Naive thymus-derived CD4-positive, alpha-beta T cell (primary cell): ENCODE measurements at regions of chr4 and their contacts with region 1.

Region 1: DNA sequence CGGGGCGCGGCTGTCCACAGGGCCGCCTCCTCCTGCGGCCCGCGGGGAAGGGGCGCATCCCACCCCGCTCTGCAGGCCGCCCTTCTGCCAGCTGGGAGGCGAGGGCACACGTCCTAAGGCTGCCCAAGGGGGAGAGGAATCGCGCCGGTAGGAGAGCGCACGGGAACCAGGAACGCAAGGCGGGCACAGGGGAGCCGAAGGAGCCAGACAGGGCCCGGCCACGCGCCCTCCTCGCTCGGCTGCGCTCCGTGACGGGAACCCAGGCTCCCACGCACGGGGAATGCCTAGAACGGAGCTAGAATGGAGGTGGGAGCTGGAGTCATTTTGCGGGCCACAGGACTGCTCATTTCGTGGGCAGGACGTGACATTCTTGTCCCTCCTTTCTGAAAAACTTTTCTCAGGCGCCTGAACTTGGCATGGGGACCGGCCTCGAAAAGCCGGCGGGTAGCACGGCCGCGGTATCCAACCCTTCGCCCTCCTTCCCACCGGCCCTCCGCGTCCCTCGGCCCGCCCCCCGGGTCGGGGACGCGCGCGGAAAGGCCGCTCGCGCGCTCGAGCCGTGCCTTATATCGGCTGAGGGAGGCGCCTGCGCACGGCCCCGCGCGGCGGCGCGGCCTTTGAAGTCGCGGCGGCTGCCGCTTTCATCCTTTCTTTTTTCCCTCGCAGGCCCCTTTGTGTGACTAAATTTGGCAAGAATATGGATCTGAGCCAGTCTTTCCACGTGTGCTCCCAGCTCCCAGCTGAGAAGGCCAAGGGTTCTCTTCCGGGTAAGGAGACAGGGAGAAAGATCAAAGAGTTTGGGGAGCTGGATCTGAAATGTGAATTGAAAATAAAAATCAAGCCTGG is 4.2 kb upstream of the LEF1 start:
- DNase-seq: peak; percentile 68 to 81 (median 78)
- ATAC-seq: peak; percentile 67
- H3K4me3 ChIP-seq: peak overlapping the region; percentile 86
- H3K4me3 Mint-ChIP-seq: peak overlapping the region; percentile 89 to 100 (median 94)
- H3K27ac ChIP-seq: peak overlapping the region; percentile 93
- H3K27ac Mint-ChIP-seq: peak overlapping the region; percentile 90 to 97 (median 95)
- H3K4me1 ChIP-seq: peaks cover 3 to 33% of the 10 kb centered on the region in 2 donors
- H3K4me1 Mint-ChIP-seq: peaks cover 27 to 71% (median 61%) of the 10 kb centered on the region in 7 donors
- H3K27me3 ChIP-seq: no peaks in the 10 kb centered on the region
- H3K27me3 Mint-ChIP-seq: peaks cover 0 to 30% (median 0%) of the 10 kb centered on the region in 5 donors

Region 2: DNA sequence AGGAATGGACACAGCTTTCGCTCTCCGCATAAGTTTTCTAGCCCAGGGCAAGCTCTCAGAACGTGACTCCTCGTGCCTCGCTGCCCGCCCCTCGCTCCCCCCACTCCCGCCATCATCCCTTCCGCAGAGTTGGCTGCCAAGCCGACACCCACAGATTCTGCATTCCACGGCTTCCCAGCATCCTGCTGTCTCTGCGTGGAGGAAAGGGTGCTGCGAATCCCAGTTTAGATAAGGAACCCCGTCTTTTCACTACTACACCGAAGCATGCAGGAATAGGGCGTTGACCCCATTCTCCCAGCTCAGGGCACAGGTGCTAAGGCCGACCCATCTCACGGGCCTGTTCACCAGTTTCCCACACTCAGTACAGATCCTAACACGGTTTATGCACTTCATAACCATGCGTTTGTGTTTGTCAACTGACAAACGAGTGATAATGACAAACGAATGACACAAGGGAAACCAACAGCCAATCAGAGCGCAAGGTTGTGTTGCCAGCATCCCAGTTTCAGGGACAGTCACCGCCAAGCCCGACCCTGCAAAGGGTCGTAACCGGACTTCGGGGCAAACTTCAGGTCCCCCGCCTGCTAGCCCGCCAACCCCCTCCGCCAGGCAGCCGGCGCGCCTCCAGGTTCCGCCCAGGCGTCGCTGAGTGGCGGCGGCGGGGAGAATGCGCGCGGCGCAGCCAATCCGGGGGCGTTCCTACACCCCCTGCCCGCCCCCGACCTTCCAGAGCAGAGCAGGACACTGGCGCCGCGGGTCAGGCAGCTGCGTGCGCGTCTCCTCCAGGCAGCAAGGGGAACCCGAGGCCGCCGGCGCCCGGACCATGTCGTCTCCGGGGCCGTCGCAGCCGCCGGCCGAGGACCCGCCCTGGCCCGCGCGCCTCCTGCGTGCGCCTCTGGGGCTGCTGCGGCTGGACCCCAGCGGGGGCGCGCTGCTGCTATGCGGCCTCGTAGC is 241.9 kb before region 1 on chr4 and contains the start of gene CYP2U1:
- CTCF ChIA-PET with region 1: no interaction called
- POLR2A ChIA-PET with region 1: no interaction called
- intact Hi-C with region 1: loop called in 1 of 2 experiments (anchors 5 kb)
- DNase-seq: peak; percentile 74 to 84 (median 81)
- ATAC-seq: peak; percentile 96
- H3K4me3 ChIP-seq: peak within 1 kb of the TSS; percentile 86
- H3K4me3 Mint-ChIP-seq: peak within 1 kb of the TSS; percentile 90 to 98 (median 92)
- H3K27ac ChIP-seq: peak within 1 kb of the TSS; percentile 71
- H3K27ac Mint-ChIP-seq: peak within 1 kb of the TSS; percentile 65 to 98 (median 88)
- H3K4me1 ChIP-seq: peaks cover 8 to 12% of the 10 kb centered on the region in 2 donors
- H3K4me1 Mint-ChIP-seq: peaks cover 21 to 50% (median 35%) of the 10 kb centered on the region in 7 donors
- H3K27me3 ChIP-seq: no peaks in the 10 kb centered on the region
- H3K27me3 Mint-ChIP-seq: peaks cover 0 to 17% (median 0%) of the 10 kb centered on the region in 5 donors
- total RNA-seq, gene CYP2U1: 3.8 to 11.4 (median 5.8) TPM

Region 3: DNA sequence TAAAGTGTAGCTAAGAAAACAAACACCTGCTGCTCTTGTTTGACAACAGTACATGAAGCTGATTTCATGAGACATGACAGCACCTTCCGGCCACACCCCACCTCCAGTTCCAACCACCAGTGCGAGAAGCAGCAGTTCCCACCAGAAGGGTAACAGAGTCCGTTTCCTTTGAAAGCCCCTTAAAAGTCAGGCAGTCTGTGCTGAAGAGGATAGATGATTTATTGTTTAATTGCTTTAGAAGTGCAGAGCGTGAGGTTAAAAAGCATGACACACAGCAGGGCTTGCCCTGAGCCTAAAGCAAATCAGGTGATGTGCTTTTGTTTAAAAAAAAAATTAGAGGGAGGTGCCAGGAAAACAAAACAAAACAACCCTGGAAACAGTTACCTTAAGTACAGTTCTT is 100.7 kb before region 1 on chr4:
- CTCF ChIA-PET with region 1: interaction called, 3 read pairs
- POLR2A ChIA-PET with region 1: interaction called, 3 read pairs
- intact Hi-C with region 1: loop called in 1 of 2 experiments (anchors 1 kb)
- DNase-seq: peak in 7 of 9 donors; percentile 63 to 94 (median 80)
- ATAC-seq: peak; percentile 92
- H3K4me3 ChIP-seq: peak overlapping the region; percentile 0
- H3K4me3 Mint-ChIP-seq: peak overlapping the region; percentile 53 to 81 (median 74)
- H3K27ac ChIP-seq: peak overlapping the region; percentile 77
- H3K27ac Mint-ChIP-seq: peak overlapping the region; percentile 84 to 98 (median 94)
- H3K4me1 ChIP-seq: peaks cover 23 to 62% of the 10 kb centered on the region in 2 donors
- H3K4me1 Mint-ChIP-seq: peaks cover 32 to 95% (median 81%) of the 10 kb centered on the region in 7 donors
- H3K27me3 ChIP-seq: no peaks in the 10 kb centered on the region
- H3K27me3 Mint-ChIP-seq: no peaks in the 10 kb centered on the region

Region 4: DNA sequence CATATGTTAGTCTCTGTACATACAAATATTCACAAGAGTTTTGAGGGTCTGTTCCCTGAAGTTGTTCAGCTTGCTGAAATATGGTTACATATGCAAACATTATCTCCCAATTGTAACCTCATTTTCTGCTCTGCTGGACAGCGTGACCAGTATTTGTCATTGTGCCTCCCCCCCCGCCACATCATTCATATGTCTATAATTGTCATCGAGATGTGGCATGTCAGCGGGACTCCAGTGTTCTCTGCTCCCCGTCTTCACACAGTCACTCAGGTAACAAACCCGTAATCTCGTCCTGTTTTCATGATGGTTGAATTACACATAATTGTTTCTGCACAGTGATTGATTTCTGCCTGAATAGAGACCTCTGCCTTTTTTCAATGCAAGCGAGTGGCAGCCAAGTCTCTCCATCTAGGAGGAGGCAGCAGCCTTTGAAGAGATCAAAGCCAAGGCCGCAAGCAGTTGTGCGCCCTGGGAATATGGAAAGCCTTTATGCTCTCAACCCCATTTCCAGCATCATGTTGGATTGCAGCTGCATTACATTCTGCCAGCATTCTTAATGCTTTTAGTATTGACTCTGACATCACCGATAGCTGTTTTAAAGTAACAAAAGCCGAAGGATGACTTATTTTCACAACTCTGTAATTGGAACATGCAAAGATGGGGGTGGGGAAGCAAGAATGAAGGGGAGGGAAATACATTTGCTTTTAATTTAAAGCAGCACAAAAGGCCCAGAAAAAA is 31.6 kb before region 1 on chr4:
- CTCF ChIA-PET with region 1: no interaction called
- POLR2A ChIA-PET with region 1: interaction called, 31 read pairs
- intact Hi-C with region 1: no loop called
- DNase-seq: peak in 1 of 9 donors; percentile 53
- ATAC-seq: no peak
- H3K4me3 ChIP-seq: peak overlapping the region; percentile 38
- H3K4me3 Mint-ChIP-seq: peak overlapping the region; percentile 79 to 91 (median 84)
- H3K27ac ChIP-seq: peak overlapping the region; percentile 81
- H3K27ac Mint-ChIP-seq: peak overlapping the region; percentile 85 to 98 (median 95)
- H3K4me1 ChIP-seq: peaks cover 26 to 97% of the 10 kb centered on the region in 2 donors
- H3K4me1 Mint-ChIP-seq: peaks cover 61 to 99% (median 95%) of the 10 kb centered on the region in 7 donors
- H3K27me3 ChIP-seq: no peaks in the 10 kb centered on the region
- H3K27me3 Mint-ChIP-seq: no peaks in the 10 kb centered on the region

Region 5: GRCh38 chr4:108345862-108346817 is 173.2 kb after region 1 on chr4:
- CTCF ChIA-PET with region 1: no interaction called
- POLR2A ChIA-PET with region 1: interaction called, 4 read pairs
- intact Hi-C with region 1: loop called in 1 of 2 experiments (anchors 1 kb)
- DNase-seq: no peak
- ATAC-seq: no peak
- H3K4me3 ChIP-seq: no peak overlapping the region
- H3K4me3 Mint-ChIP-seq: peak overlapping the region in 2 of 10 donors; percentile 41 to 46
- H3K27ac ChIP-seq: no peak overlapping the region
- H3K27ac Mint-ChIP-seq: peak overlapping the region in 5 of 9 donors; percentile 7 to 94 (median 39)
- H3K4me1 ChIP-seq: peaks cover 12 to 37% of the 10 kb centered on the region in 2 donors
- H3K4me1 Mint-ChIP-seq: peaks cover 31 to 76% (median 51%) of the 10 kb centered on the region in 7 donors
- H3K27me3 ChIP-seq: no peaks in the 10 kb centered on the region
- H3K27me3 Mint-ChIP-seq: peaks cover 0 to 5% (median 0%) of the 10 kb centered on the region in 5 donors

Region 6: GRCh38 chr4:108492816-108493595 is 320.0 kb after region 1 on chr4:
- CTCF ChIA-PET with region 1: no interaction called
- POLR2A ChIA-PET with region 1: no interaction called
- intact Hi-C with region 1: loop called in 1 of 2 experiments (anchors 5 kb)
- DNase-seq: no peak
- ATAC-seq: peak; percentile 27
- H3K4me3 ChIP-seq: no peak overlapping the region
- H3K4me3 Mint-ChIP-seq: no peak overlapping the region
- H3K27ac ChIP-seq: no peak overlapping the region
- H3K27ac Mint-ChIP-seq: no peak overlapping the region
- H3K4me1 ChIP-seq: no peaks in the 10 kb centered on the region
- H3K4me1 Mint-ChIP-seq: peaks cover 0 to 13% (median 3%) of the 10 kb centered on the region in 7 donors
- H3K27me3 ChIP-seq: no peaks in the 10 kb centered on the region
- H3K27me3 Mint-ChIP-seq: peaks cover 0 to 3% (median 0%) of the 10 kb centered on the region in 5 donors

Region 7: GRCh38 chr4:108620101-108620932 is 447.3 kb after region 1 on chr4 and contains the start of gene RPL34:
- CTCF ChIA-PET with region 1: no interaction called
- POLR2A ChIA-PET with region 1: interaction called, 3 read pairs
- intact Hi-C with region 1: loop called in 1 of 2 experiments (anchors 1 kb)
- DNase-seq: peak; percentile 85 to 99 (median 96)
- ATAC-seq: peak; percentile 100
- H3K4me3 ChIP-seq: peak within 1 kb of the TSS; percentile 98
- H3K4me3 Mint-ChIP-seq: peak within 1 kb of the TSS; percentile 87 to 99 (median 96)
- H3K27ac ChIP-seq: peak within 1 kb of the TSS; percentile 90
- H3K27ac Mint-ChIP-seq: peak within 1 kb of the TSS; percentile 95 to 99 (median 97)
- H3K4me1 ChIP-seq: peaks cover 29 to 30% of the 10 kb centered on the region in 2 donors
- H3K4me1 Mint-ChIP-seq: peaks cover 33 to 81% (median 66%) of the 10 kb centered on the region in 7 donors
- H3K27me3 ChIP-seq: no peaks in the 10 kb centered on the region
- H3K27me3 Mint-ChIP-seq: peaks cover 0 to 3% (median 0%) of the 10 kb centered on the region in 5 donors
- total RNA-seq, gene RPL34: 1,411 to 3,442 (median 3,215) TPM